BJ (cell line): ENCODE measurements at regions of chr7 and their contacts with region 1.

Region 1: DNA sequence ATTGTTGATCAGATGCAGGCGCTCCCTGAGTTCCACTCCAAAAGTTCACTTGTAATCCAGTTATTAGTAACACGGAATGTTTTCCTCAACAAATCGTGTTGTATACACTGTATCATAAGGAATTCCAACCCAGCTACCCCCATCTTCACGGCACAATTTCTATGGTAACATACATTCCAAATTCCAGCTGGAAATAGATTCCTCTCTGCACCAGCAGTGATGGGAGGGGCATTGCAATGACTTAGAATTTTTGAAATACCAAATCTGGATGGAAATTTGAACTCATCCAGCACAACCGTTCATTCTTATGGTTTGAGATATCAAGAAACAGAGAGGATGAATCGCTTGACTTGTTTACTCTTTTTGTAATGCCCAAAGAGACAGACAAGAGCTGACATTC is 38.9 kb upstream of the RHEB start:
- DNase-seq: no peak
- H3K4me3 ChIP-seq: no peak overlapping the region
- H3K27me3 ChIP-seq: no peaks in the 10 kb centered on the region
- CTCF ChIP-seq: no peak

Region 2: DNA sequence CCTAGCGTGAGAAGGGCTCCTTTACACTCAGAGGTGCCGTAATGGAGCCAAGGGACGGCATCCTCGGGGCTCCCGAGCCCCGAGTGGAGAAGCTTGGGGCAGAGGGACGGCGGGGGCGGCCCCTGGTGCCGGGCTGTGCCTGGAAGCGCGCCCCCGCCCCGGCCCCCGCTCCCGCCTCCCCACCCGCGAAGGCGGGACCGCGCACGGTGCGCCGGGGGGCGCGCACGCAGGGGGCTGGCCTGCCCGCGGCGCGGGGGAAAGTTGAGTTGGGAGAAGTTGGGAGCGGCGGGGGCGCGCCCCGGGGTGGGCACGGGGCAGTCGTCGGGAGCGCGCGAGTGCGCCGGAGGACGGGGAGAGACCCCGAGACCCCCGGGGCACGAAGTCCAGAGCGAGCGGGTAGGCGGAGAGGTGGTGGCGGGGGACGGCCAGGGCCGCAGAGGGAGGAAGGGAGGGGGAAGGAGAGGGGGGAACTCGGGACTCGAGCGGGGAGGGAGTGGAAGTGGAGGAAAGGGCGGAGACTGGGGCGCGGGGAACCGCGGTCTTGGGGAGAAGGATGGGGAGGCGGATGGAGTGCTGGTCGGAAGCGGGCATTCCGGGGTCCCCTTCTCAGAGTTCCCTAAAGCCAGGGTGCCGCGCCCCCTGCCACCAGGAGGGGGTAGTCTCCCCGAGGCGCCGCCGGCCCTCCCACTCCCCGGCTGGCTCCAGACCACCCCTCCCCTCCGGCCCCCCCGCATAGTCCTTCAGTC is 499.0 kb before region 1 on chr7 and contains the start of gene SLC4A2:
- CTCF ChIA-PET with region 1: no interaction called
- POLR2A ChIA-PET with region 1: no interaction called
- DNase-seq: no peak
- H3K4me3 ChIP-seq: peak within 1 kb of the TSS; percentile 76
- H3K27me3 ChIP-seq: no peaks in the 10 kb centered on the region
- CTCF ChIP-seq: peak; percentile 59
- polyA plus RNA-seq, gene SLC4A2: 59.0 and 86.1 TPM in 2 replicates

Region 3: DNA sequence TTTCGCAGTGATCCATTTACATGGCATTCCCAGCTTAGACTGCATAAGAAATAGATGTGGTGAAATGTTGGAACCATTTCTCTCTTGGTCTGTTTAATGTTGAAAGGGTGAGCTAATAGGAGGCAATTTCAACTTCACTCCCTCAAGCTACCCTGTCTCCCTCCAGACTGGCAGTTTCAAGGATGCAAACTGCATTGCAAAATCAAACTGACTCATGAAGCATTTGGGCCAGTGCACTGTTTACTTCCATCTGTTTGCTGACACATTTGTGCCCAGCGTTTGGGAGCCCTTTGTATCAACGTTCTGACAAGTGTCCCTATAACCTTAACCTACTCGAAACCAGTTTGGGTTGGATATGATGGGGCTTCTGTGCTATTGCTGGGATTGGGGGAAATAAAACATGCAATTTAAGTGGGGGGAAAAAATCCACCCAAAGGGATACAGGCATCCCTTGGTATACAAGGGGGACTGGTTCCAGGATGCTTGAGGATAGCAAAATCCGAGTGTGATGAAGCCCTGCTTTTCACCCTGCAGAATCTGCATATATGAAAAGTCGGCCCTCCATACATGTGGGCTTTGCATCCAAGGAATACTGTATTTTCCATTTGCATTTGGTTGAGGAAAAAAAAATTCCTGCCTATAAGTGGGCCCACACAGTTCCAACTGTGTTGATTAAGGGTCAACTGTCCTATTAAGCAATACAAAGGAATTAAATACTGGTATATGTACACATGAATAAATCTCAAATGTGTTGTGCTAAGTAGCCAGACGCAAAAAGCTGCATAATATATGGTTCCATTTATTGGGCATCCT is 54.5 kb before region 1 on chr7:
- CTCF ChIA-PET with region 1: no interaction called
- POLR2A ChIA-PET with region 1: interaction called, 10 read pairs
- DNase-seq: peak; percentile 68
- H3K4me3 ChIP-seq: no peak overlapping the region
- H3K27me3 ChIP-seq: no peaks in the 10 kb centered on the region
- CTCF ChIP-seq: no peak

Region 4: GRCh38 chr7:151572136-151572535 is 13.6 kb after region 1 on chr7:
- CTCF ChIA-PET with region 1: no interaction called
- POLR2A ChIA-PET with region 1: no interaction called
- DNase-seq: no peak
- H3K4me3 ChIP-seq: no peak overlapping the region
- H3K27me3 ChIP-seq: no peaks in the 10 kb centered on the region
- CTCF ChIP-seq: no peak